Vagina (tissue), 2 donors: ENCODE measurements at regions of chr7 and their contacts with region 1.

Region 1: DNA sequence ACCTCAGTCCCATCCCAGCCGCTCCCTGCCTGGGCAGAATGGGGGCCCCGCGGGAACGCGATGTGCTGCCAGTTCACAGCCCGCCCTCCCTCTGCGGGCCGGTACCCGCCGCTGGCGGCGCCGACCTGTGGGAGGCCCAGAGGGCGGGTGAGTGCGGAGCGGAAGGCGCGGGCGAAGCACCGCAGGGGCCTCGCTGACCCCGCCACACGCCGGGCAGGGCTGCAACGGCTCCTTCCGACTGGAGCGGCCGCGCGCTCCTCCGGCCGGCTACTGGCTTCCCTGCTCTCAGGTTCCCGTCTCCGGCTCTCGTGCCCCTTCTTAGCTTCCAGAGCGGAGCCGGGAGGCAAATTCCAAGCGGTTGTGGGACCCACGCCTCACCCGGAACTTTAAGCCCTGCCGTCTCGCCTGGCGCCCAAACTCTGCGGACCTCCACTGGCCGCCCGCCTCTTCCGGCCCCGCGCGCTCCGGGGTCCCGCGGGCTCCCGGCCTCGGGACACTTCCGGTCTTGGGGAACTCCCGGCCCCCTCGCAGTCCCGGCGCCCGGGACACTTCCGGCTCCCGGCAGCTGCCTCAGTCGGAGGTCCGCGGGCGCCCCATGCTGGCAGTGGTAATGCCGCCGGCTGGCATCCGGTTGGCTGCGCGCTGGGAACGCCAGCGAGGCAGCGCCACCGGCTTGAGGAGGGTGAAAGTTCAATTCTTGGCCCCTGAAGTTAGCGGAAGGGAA is at the start of gene CYREN:
- DNase-seq: no peak
- H3K4me3 ChIP-seq: peak within 1 kb of the TSS; percentile 78 to 84
- H3K27ac ChIP-seq: peak within 1 kb of the TSS; percentile 98
- H3K4me1 ChIP-seq: peaks cover 43% of the 10 kb centered on the region
- H3K27me3 ChIP-seq: no peaks in the 10 kb centered on the region
- CTCF ChIP-seq: peak; percentile 31 to 77 (median 50)
- POLR2A ChIP-seq: peak in 1 of 2 donors; percentile 26
- total RNA-seq, gene CYREN: 33.4 TPM

Region 2: DNA sequence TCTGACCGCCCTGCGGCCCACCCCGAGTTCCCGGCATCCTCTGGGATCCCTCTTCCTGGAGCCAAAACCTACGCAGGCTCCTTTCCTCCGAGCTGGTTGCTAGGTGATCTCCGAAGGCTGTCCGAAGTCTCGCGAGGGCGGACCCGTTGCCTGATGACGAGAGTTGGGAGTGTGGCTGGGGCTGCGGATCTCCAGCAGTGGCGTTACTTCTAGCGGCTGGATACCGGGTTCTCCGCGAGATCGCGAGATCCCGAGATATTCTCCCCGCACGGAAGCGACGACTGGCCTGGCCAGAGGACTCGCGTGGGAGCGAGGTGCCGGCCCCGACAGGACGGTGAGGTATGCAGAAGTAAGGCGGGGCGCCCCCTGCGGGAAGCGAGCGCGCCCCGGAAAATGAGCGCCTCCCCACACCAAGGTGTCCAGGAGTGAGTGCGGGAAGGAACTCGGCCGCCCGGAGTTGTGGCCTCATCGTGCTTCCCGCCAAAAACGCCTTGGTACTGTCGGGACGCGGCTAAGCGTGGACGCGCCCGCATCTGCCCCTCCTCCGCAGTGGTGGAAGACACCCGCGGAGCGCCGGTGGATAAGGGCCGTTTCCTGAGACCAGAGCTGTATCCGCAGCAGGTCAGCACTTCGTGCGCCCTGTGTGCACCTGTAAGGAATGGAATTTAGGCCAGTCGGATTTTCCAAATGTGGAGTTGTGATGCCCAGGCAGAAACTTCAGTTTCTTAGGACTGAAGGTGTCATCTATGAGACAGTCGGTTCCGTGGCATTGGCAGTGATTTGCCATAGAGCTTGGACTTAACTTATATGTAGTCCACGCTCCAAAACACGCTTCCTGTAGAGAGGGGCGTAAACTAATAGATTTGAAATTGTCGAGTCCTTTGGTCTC is 183.8 kb before region 1 on chr7 and contains the start of gene AGBL3:
- intact Hi-C with region 1: loop called (anchors 2 kb)
- DNase-seq: peak in 1 of 2 donors; percentile 96
- H3K4me3 ChIP-seq: peak within 1 kb of the TSS; percentile 81 to 87
- H3K27ac ChIP-seq: peak within 1 kb of the TSS; percentile 92
- H3K4me1 ChIP-seq: peaks cover 11% of the 10 kb centered on the region
- H3K27me3 ChIP-seq: no peaks in the 10 kb centered on the region
- CTCF ChIP-seq: peak; percentile 32 to 68 (median 61)
- POLR2A ChIP-seq: peak in 1 of 2 donors; percentile 24
- total RNA-seq, gene AGBL3: 4.9 TPM